Activated CD4-positive, alpha-beta memory T cell treated with anti-CD3 and anti-CD28 coated beads for 36 hours (primary cell): ENCODE measurements at regions of chr14 and their contacts with region 1.

Region 1: GRCh38 chr14:39432179-39432618 is at the start of gene FBXO33:
- DNase-seq: peak; percentile 98
- H3K4me3 Mint-ChIP-seq: peak within 1 kb of the TSS; percentile 99
- H3K27ac Mint-ChIP-seq: peak within 1 kb of the TSS; percentile 100
- H3K4me1 Mint-ChIP-seq: peaks cover 36% of the 10 kb centered on the region
- H3K27me3 Mint-ChIP-seq: no peaks in the 10 kb centered on the region
- total RNA-seq, gene FBXO33: 17.4 to 18.8 TPM

Region 2: DNA sequence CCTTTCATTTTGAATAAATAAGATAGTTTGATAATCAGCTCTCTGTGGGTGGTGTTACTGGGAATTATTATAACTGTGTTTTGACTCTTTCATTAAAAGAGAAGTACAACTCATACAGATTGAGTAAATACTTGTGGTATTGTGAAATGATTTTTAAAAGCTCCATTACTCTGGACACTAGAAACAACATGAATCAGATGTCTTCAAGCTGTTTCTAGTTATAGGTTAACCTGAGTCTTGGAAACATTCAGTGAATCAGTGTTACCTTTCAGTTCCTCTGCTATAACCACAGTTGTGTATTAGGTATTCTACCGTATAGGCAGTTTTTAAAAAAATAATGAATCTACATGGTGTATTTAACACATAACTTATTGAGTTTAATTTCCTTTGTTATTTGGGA is 1352.9 kb before region 1 on chr14:
- CTCF ChIA-PET with region 1: no interaction called
- POLR2A ChIA-PET with region 1: no interaction called
- intact Hi-C with region 1: loop called (anchors 10 kb)
- DNase-seq: no peak
- H3K4me3 Mint-ChIP-seq: no peak overlapping the region
- H3K27ac Mint-ChIP-seq: peak overlapping the region; percentile 55
- H3K4me1 Mint-ChIP-seq: peaks cover 55% of the 10 kb centered on the region
- H3K27me3 Mint-ChIP-seq: no peaks in the 10 kb centered on the region

Region 3: DNA sequence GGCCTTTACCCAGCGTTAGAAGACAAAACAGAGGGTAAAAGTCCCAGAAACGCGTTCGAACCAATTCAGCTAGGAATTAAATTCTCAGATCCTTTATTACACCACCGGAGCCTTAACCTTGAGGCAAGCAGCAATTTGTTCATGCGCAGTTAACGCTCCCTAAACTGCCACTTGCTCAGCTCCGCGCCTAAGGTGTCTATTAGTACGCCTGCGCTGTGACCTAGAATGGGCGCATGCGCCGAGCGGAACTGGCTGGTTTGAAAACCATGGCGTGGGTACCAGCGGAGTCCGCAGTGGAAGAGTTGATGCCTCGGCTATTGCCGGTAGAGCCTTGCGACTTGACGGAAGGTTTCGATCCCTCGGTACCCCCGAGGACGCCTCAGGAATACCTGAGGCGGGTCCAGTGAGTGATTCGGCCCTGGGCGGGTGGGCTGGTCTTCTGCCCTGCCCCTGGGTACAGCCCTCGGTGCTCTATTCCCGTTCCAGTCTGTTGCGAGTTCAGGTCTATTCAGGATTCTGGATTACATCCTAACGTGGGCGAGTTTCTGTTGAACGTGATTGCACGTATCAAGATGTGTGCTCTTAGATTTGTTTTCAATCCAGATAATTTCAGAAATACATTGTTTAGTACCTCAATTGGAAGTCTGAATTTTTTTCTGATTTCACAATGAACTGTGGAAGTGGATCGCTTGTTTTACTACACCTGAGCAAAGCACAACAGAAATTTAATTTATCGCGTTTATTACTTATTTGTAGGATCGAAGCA is 317.9 kb before region 1 on chr14 and contains the start of gene GEMIN2:
- CTCF ChIA-PET with region 1: no interaction called
- POLR2A ChIA-PET with region 1: interaction called, 10 read pairs
- intact Hi-C with region 1: no loop called
- DNase-seq: peak; percentile 97
- H3K4me3 Mint-ChIP-seq: peak within 1 kb of the TSS; percentile 97
- H3K27ac Mint-ChIP-seq: peak within 1 kb of the TSS; percentile 93
- H3K4me1 Mint-ChIP-seq: peaks cover 18% of the 10 kb centered on the region
- H3K27me3 Mint-ChIP-seq: no peaks in the 10 kb centered on the region
- total RNA-seq, gene GEMIN2: 17.2 to 18.8 TPM

Region 4: GRCh38 chr14:39174560-39175444 is 257.4 kb before region 1 on chr14 and contains the start of gene PNN:
- CTCF ChIA-PET with region 1: no interaction called
- POLR2A ChIA-PET with region 1: interaction called, 15 read pairs
- intact Hi-C with region 1: loop called (anchors 1 kb)
- DNase-seq: peak; percentile 98
- H3K4me3 Mint-ChIP-seq: peak within 1 kb of the TSS; percentile 89
- H3K27ac Mint-ChIP-seq: peak within 1 kb of the TSS; percentile 95
- H3K4me1 Mint-ChIP-seq: peaks cover 32% of the 10 kb centered on the region
- H3K27me3 Mint-ChIP-seq: no peaks in the 10 kb centered on the region
- total RNA-seq, gene PNN: 85.3 to 88.8 TPM

Region 5: GRCh38 chr14:39368261-39368959 is 63.8 kb before region 1 on chr14:
- CTCF ChIA-PET with region 1: no interaction called
- POLR2A ChIA-PET with region 1: no interaction called
- intact Hi-C with region 1: no loop called
- DNase-seq: peak; percentile 47
- H3K4me3 Mint-ChIP-seq: no peak overlapping the region
- H3K27ac Mint-ChIP-seq: no peak overlapping the region
- H3K4me1 Mint-ChIP-seq: no peaks in the 10 kb centered on the region
- H3K27me3 Mint-ChIP-seq: no peaks in the 10 kb centered on the region

Region 6: DNA sequence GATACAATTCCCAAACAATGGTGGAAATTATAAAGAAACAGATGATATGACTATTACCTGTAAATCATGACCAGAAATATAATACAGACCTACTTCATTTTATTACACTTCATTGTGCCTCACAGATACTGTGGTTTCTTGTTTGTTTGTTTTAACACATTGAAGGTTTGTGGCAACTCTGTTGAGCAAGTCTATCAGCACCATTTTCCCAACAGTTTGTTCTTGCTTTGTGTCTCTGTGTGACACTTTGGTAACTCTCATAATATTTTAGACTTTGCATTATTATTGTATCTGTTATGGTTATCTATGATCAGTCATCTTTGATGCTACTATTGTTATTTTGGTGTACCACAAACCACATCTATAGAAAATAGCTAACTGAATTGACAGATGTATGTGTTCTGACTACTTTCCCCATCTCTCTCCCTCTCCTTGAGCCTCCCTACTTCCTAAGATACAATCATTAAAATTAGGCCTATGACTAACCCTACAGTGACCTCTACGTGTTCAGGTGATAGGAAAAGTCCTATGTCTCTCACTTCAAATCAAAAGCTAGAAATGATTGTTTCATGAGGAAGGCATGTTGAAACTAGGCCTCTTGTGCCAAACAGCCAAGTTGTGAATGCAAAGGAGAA is 49.1 kb before region 1 on chr14:
- CTCF ChIA-PET with region 1: no interaction called
- POLR2A ChIA-PET with region 1: no interaction called
- intact Hi-C with region 1: loop called (anchors 1 kb)
- DNase-seq: no peak
- H3K4me3 Mint-ChIP-seq: no peak overlapping the region
- H3K27ac Mint-ChIP-seq: no peak overlapping the region
- H3K4me1 Mint-ChIP-seq: peaks cover 24% of the 10 kb centered on the region
- H3K27me3 Mint-ChIP-seq: no peaks in the 10 kb centered on the region

Region 7: GRCh38 chr14:39446131-39446744 is 14.0 kb after region 1 on chr14:
- CTCF ChIA-PET with region 1: interaction called, 5 read pairs
- POLR2A ChIA-PET with region 1: interaction called, 9 read pairs
- intact Hi-C with region 1: loop called (anchors 1 kb)
- DNase-seq: no peak
- H3K4me3 Mint-ChIP-seq: peak overlapping the region; percentile 1
- H3K27ac Mint-ChIP-seq: no peak overlapping the region
- H3K4me1 Mint-ChIP-seq: peaks cover 33% of the 10 kb centered on the region
- H3K27me3 Mint-ChIP-seq: no peaks in the 10 kb centered on the region

Region 8: GRCh38 chr14:39581474-39581873 is 149.3 kb after region 1 on chr14:
- CTCF ChIA-PET with region 1: no interaction called
- POLR2A ChIA-PET with region 1: no interaction called
- intact Hi-C with region 1: no loop called
- DNase-seq: no peak
- H3K4me3 Mint-ChIP-seq: no peak overlapping the region
- H3K27ac Mint-ChIP-seq: no peak overlapping the region
- H3K4me1 Mint-ChIP-seq: no peaks in the 10 kb centered on the region
- H3K27me3 Mint-ChIP-seq: no peaks in the 10 kb centered on the region